CD4-positive, alpha-beta T cell (primary cell): ENCODE measurements at regions of chr6 and their contacts with region 1.

Region 1: DNA sequence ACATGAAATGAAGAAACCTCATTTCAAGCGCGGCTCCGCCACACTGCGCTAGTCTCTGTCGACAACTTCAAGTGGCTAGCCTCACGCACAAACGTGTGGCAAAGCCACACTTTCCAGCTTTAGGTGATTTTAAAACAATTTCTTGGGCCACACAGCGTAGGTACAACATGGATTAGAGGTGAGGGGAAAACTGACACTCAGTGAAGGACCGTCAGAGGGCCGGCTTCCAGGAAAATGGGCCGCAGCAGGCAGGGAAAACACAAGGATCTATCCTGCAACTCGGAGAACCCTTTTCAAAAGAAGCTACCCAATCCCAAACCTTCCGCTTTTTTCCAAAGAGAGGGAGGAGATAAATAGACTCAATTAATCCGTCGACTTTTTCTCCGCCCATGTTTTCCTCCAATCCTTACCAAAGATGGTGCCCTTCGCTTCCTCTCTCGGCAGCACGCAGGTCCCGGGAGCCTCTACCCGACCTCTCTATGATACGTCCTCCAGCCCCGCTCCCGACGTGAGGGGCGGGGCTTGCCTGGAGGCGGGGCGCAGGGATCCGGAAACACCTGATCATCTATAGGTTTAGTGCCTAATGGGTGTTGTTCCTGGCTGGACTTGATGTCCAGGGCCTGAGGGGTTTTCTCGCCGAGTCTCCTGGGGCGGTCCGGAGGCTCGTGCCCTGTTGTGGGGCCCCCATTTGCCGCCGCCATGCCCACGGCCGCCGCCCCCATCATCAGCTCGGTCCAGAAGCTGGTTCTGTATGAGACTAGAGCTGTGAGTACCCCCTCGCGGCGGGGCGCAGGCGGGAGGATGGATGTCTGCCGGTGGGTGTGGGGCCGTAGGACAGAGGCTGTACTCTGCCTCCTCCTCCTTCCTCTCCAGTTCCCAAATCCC is at the starts of genes AK9 and FIG4:
- DNase-seq: peak; percentile 76 to 94 (median 88)
- ATAC-seq: peak; percentile 96
- H3K4me3 ChIP-seq: peak within 1 kb of the TSS; percentile 88
- H3K4me3 Mint-ChIP-seq: peak within 1 kb of the TSS; percentile 96
- H3K27ac ChIP-seq: peak within 1 kb of the TSS; percentile 59 to 71
- H3K27ac Mint-ChIP-seq: peak within 1 kb of the TSS; percentile 95
- H3K4me1 ChIP-seq: peaks cover 13% of the 10 kb centered on the region
- H3K4me1 Mint-ChIP-seq: peaks cover 34% of the 10 kb centered on the region
- H3K27me3 ChIP-seq: no peaks in the 10 kb centered on the region
- H3K27me3 Mint-ChIP-seq: no peaks in the 10 kb centered on the region
- CTCF ChIP-seq: peak; percentile 27
- total RNA-seq, gene AK9: 5.3 to 6.6 TPM
- total RNA-seq, gene FIG4: 3.3 to 4.0 TPM

Region 2: GRCh38 chr6:107964671-107965340 is 1726.2 kb before region 1 on chr6:
- CTCF ChIA-PET with region 1: no interaction called
- POLR2A ChIA-PET with region 1: no interaction called
- intact Hi-C with region 1: loop called in 1 of 2 experiments (anchors 10 kb)
- DNase-seq: no peak
- ATAC-seq: no peak
- H3K4me3 ChIP-seq: no peak overlapping the region
- H3K4me3 Mint-ChIP-seq: no peak overlapping the region
- H3K27ac ChIP-seq: no peak overlapping the region
- H3K27ac Mint-ChIP-seq: no peak overlapping the region
- H3K4me1 ChIP-seq: no peaks in the 10 kb centered on the region
- H3K4me1 Mint-ChIP-seq: no peaks in the 10 kb centered on the region
- H3K27me3 ChIP-seq: no peaks in the 10 kb centered on the region
- H3K27me3 Mint-ChIP-seq: no peaks in the 10 kb centered on the region
- CTCF ChIP-seq: no peak

Region 3: DNA sequence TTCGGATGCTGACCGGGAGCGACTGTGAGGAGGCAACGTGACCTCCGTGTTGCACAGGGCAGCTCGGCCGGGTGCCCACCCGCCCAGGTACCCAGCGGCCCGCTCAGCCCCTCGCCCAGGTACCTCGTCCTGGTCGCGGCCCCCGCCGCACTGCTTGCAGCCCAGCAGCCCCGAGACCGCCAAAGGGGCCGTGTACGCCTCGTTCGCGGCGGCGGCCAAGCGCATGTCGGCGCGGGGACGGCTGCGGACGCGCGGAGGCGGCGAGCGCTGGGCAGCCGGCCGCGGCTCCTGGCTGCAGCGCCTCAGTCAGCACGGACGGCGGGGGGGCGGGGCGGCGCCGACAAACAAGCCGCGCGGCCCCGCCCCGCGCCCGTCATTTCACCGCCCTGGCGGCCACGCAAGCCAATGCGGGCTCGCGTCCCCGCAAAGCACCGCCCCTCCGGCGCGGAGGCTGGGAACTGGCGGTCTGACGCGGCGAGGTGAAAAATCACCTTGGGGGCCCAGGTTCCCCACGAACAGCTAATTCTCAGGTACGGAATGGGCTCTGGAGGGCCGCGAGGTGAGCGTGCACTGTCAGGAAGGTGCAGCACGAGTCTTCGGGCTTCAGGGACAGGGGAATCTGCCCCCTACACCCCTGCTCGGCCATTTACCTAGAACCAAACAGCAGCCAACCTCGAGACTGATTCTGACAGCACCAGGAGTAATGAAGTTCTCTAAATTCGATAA is 681.6 kb before region 1 on chr6:
- CTCF ChIA-PET with region 1: no interaction called
- POLR2A ChIA-PET with region 1: no interaction called
- intact Hi-C with region 1: loop called in 1 of 2 experiments (anchors 10 kb)
- DNase-seq: peak; percentile 81 to 97 (median 90)
- ATAC-seq: peak; percentile 94
- H3K4me3 ChIP-seq: peak overlapping the region; percentile 93
- H3K4me3 Mint-ChIP-seq: peak overlapping the region; percentile 100
- H3K27ac ChIP-seq: peak overlapping the region; percentile 84 to 92
- H3K27ac Mint-ChIP-seq: peak overlapping the region; percentile 99
- H3K4me1 ChIP-seq: peaks cover 18% of the 10 kb centered on the region
- H3K4me1 Mint-ChIP-seq: peaks cover 73% of the 10 kb centered on the region
- H3K27me3 ChIP-seq: no peaks in the 10 kb centered on the region
- H3K27me3 Mint-ChIP-seq: no peaks in the 10 kb centered on the region
- CTCF ChIP-seq: peak; percentile 14

Region 4: GRCh38 chr6:109455502-109456282 is 235.3 kb before region 1 on chr6 and contains the start of gene MICAL1:
- CTCF ChIA-PET with region 1: no interaction called
- POLR2A ChIA-PET with region 1: no interaction called
- intact Hi-C with region 1: loop called in 1 of 2 experiments (anchors 10 kb)
- DNase-seq: peak; percentile 45 to 92 (median 70)
- ATAC-seq: peak; percentile 58
- H3K4me3 ChIP-seq: peak within 1 kb of the TSS; percentile 97
- H3K4me3 Mint-ChIP-seq: peak within 1 kb of the TSS; percentile 99
- H3K27ac ChIP-seq: peak within 1 kb of the TSS; percentile 91 to 94
- H3K27ac Mint-ChIP-seq: peak within 1 kb of the TSS; percentile 95
- H3K4me1 ChIP-seq: peaks cover 74% of the 10 kb centered on the region
- H3K4me1 Mint-ChIP-seq: peaks cover 66% of the 10 kb centered on the region
- H3K27me3 ChIP-seq: no peaks in the 10 kb centered on the region
- H3K27me3 Mint-ChIP-seq: no peaks in the 10 kb centered on the region
- CTCF ChIP-seq: no peak
- total RNA-seq, gene MICAL1: 106 to 107 TPM

Region 5: DNA sequence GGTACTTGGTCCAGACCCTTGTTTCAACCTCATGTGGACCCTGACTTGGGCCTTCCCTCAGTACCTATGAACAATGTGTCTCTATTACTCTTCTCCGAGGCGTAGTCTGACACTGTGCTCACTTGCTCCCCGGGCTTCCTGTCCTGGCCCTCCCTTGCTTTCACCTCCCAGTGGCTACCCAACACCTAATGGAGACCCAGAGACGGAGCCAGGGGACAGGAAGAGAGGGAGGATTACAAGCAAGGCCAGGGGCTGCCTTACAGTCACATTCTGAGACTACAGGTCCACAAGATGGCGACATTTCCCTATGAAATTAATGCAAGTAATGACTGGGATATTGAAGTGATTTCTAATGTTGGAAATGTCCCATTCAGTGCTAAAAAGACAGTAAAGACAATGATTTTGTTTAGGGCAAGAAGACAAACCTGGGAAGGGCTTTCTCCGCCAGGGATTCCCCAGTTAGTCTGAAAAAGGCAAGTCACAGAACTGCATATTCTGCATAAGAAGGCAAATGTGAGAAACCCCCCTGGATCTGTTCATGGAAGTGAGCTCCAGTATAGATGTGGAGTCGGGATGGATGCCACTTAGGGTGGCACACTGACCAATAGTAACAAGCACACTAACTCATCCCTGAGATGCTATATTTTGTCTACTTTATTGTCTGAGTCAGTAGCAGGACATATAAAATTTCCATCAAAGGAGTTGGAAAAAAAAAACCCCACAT is 163.9 kb before region 1 on chr6:
- CTCF ChIA-PET with region 1: no interaction called
- POLR2A ChIA-PET with region 1: no interaction called
- intact Hi-C with region 1: loop called in 1 of 2 experiments (anchors 5 kb)
- DNase-seq: peak in 13 of 14 experiments; percentile 9 to 78 (median 32)
- ATAC-seq: peak; percentile 61
- H3K4me3 ChIP-seq: no peak overlapping the region
- H3K4me3 Mint-ChIP-seq: no peak overlapping the region
- H3K27ac ChIP-seq: no peak overlapping the region
- H3K27ac Mint-ChIP-seq: no peak overlapping the region
- H3K4me1 ChIP-seq: peaks cover 4% of the 10 kb centered on the region
- H3K4me1 Mint-ChIP-seq: no peaks in the 10 kb centered on the region
- H3K27me3 ChIP-seq: no peaks in the 10 kb centered on the region
- H3K27me3 Mint-ChIP-seq: no peaks in the 10 kb centered on the region
- CTCF ChIP-seq: peak; percentile 75

Region 6: DNA sequence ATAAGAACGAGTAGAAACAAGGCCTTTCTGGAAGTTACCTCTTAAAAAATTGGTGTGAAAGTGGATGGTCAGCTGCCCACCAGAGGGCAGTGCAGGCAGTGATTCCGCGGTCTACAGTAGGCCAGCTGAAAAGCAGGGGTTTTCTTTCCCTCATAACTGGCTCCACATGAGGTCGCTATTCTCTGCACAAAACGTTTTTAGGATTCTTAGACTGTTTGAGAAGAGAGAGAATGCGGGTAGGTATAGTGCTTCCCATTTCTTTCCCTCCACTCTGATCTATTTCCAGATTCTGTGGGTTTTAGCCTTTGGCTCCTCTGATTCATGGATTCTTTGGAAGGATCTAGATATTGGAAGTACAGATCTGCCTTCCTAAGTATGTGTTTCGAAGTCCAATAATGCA is 14.3 kb after region 1 on chr6:
- CTCF ChIA-PET with region 1: interaction called, 38 read pairs
- POLR2A ChIA-PET with region 1: interaction called, 3 read pairs
- intact Hi-C with region 1: loop called in 1 of 2 experiments (anchors 2 kb)
- DNase-seq: peak; percentile 51 to 88 (median 66)
- ATAC-seq: peak; percentile 97
- H3K4me3 ChIP-seq: no peak overlapping the region
- H3K4me3 Mint-ChIP-seq: no peak overlapping the region
- H3K27ac ChIP-seq: no peak overlapping the region
- H3K27ac Mint-ChIP-seq: no peak overlapping the region
- H3K4me1 ChIP-seq: no peaks in the 10 kb centered on the region
- H3K4me1 Mint-ChIP-seq: peaks cover 40% of the 10 kb centered on the region
- H3K27me3 ChIP-seq: no peaks in the 10 kb centered on the region
- H3K27me3 Mint-ChIP-seq: no peaks in the 10 kb centered on the region
- CTCF ChIP-seq: peak; percentile 91

Region 7: GRCh38 chr6:111259089-111259831 is 1568.3 kb after region 1 on chr6:
- CTCF ChIA-PET with region 1: no interaction called
- POLR2A ChIA-PET with region 1: no interaction called
- intact Hi-C with region 1: loop called in 1 of 2 experiments (anchors 5 kb)
- DNase-seq: peak; percentile 98 to 100 (median 99)
- ATAC-seq: peak; percentile 95
- H3K4me3 ChIP-seq: peak overlapping the region; percentile 60
- H3K4me3 Mint-ChIP-seq: peak overlapping the region; percentile 90
- H3K27ac ChIP-seq: peak overlapping the region; percentile 78 to 89
- H3K27ac Mint-ChIP-seq: peak overlapping the region; percentile 87
- H3K4me1 ChIP-seq: peaks cover 28% of the 10 kb centered on the region
- H3K4me1 Mint-ChIP-seq: peaks cover 35% of the 10 kb centered on the region
- H3K27me3 ChIP-seq: no peaks in the 10 kb centered on the region
- H3K27me3 Mint-ChIP-seq: no peaks in the 10 kb centered on the region
- CTCF ChIP-seq: peak; percentile 96